ENCODE measurements at regions of chr1 and their contacts with region 1.

Region 1: GRCh38 chr1:207797229-207797961 is 45.5 kb downstream of the CD46 start:
- DNase-seq: peak; percentile 77 to 82
- ATAC-seq: peak; percentile 94
- H3K4me3 ChIP-seq: no peak overlapping the region
- H3K27ac ChIP-seq: peak overlapping the region; percentile 4 to 68; a peak in 4 of 6 replicates
- H3K4me1 ChIP-seq: peaks cover 8% of the 10 kb centered on the region
- CTCF ChIP-seq: peak; percentile 84
- EP300 ChIP-seq: no peak
- POLR2A ChIP-seq: no peak
- RAD21 ChIP-seq: peak; percentile 71 to 80

Region 2: GRCh38 chr1:207654320-207654719 is 143.1 kb before region 1 on chr1:
- CTCF ChIA-PET with region 1: interaction called, 14 read pairs
- POLR2A ChIA-PET with region 1: no interaction called
- DNase-seq: peak in 1 of 2 experiments; percentile 8
- ATAC-seq: peak; percentile 38 to 67; a peak in 2 of 6 replicates
- H3K4me3 ChIP-seq: no peak overlapping the region
- H3K27ac ChIP-seq: no peak overlapping the region
- H3K4me1 ChIP-seq: no peaks in the 10 kb centered on the region
- CTCF ChIP-seq: peak; percentile 45
- EP300 ChIP-seq: no peak
- POLR2A ChIP-seq: no peak
- RAD21 ChIP-seq: peak; percentile 10 to 24; a peak in 1 of 5 replicates

Region 3: GRCh38 chr1:207818971-207819451 is 21.6 kb after region 1 on chr1:
- CTCF ChIA-PET with region 1: interaction called, 21 read pairs
- POLR2A ChIA-PET with region 1: interaction called, 5 read pairs
- DNase-seq: peak; percentile 46 to 49
- ATAC-seq: no peak
- H3K4me3 ChIP-seq: no peak overlapping the region
- H3K27ac ChIP-seq: peak overlapping the region; percentile 61 to 73; a peak in 4 of 6 replicates
- H3K4me1 ChIP-seq: peaks cover 44% of the 10 kb centered on the region
- CTCF ChIP-seq: no peak
- EP300 ChIP-seq: no peak
- POLR2A ChIP-seq: no peak
- RAD21 ChIP-seq: no peak

Region 4: DNA sequence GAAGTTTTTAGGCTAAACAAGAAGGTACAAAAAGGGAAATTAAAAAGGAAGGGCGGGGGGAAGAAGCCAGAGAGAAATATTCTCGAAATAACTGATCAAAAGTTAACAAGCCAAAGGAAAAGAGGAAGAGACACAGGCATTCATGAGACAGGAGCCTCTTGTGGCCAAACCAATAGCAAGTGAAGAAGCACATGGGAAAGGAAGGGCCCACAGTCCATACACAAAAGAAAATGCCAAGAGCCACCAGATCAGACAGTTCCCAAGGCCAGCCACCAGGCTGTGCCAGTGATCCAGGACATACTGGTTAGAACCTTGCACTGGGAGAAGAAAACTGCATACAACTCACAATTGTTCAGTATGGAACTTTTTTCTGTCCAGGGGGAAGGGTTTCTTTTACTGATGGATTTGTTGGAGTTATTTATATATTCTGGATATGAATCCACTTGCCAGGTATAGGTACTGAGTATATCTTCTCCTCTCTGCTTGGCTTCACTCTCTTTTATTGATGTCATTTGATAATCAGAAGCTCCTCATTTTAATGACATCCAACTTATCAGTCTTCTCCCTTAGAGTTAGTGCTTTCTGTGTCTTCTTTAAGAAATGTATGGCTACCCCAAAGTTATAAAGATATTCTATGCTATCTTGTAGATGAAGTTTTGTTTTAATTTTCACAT is 31.2 kb after region 1 on chr1:
- CTCF ChIA-PET with region 1: interaction called, 15 read pairs
- POLR2A ChIA-PET with region 1: interaction called, 5 read pairs
- DNase-seq: peak; percentile 86 to 90
- ATAC-seq: peak; percentile 69 to 81
- H3K4me3 ChIP-seq: no peak overlapping the region
- H3K27ac ChIP-seq: peak overlapping the region; percentile 32 to 43; a peak in 4 of 6 replicates
- H3K4me1 ChIP-seq: peaks cover 45% of the 10 kb centered on the region
- CTCF ChIP-seq: peak; percentile 74
- EP300 ChIP-seq: no peak
- POLR2A ChIP-seq: no peak
- RAD21 ChIP-seq: peak; percentile 77 to 80